Mammary epithelial cell (primary cell): ENCODE measurements at regions of chr1 and their contacts with region 1.

Region 1: GRCh38 chr1:33586111-33586510 is 113.7 kb downstream of the ZSCAN20 start:
- DNase-seq: peak; percentile 45
- H3K4me3 ChIP-seq: no peak overlapping the region
- H3K27ac ChIP-seq: no peak overlapping the region
- H3K4me1 ChIP-seq: no peaks in the 10 kb centered on the region
- H3K27me3 ChIP-seq: no peaks in the 10 kb centered on the region
- CTCF ChIP-seq: no peak

Region 2: GRCh38 chr1:33030575-33030974 is 555.5 kb before region 1 on chr1:
- CTCF ChIA-PET with region 1: no interaction called
- dilution Hi-C with region 1: no loop called
- in situ Hi-C with region 1: no loop called
- intact Hi-C with region 1: no loop called
- DNase-seq: no peak
- H3K4me3 ChIP-seq: no peak overlapping the region
- H3K27ac ChIP-seq: no peak overlapping the region
- H3K4me1 ChIP-seq: peaks cover 10% of the 10 kb centered on the region
- H3K27me3 ChIP-seq: no peaks in the 10 kb centered on the region
- CTCF ChIP-seq: no peak

Region 3: DNA sequence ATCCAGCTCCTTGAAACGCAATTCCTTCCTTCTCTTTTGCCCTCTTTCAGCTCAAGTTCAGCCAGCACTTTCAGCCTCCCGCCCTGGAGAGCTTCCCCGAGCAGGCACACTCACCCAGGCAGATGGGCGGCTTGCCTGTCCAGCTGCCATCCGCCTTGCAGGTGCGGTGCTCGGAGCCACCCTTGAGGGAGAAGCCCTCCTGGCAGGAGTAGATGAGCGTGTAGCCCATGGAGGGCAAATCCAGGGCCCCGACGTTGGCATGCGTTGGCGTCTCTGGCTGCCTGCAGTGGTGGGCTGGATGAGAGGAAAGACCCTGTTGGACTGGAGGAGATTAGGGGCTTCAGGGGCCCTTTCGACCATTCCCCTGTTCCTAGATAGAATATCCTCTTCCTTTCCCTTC is 53.2 kb before region 1 on chr1:
- CTCF ChIA-PET with region 1: no interaction called
- dilution Hi-C with region 1: loop called (anchors 5 kb)
- in situ Hi-C with region 1: no loop called
- intact Hi-C with region 1: no loop called
- DNase-seq: no peak
- H3K4me3 ChIP-seq: no peak overlapping the region
- H3K27ac ChIP-seq: no peak overlapping the region
- H3K4me1 ChIP-seq: no peaks in the 10 kb centered on the region
- H3K27me3 ChIP-seq: no peaks in the 10 kb centered on the region
- CTCF ChIP-seq: no peak

Region 4: DNA sequence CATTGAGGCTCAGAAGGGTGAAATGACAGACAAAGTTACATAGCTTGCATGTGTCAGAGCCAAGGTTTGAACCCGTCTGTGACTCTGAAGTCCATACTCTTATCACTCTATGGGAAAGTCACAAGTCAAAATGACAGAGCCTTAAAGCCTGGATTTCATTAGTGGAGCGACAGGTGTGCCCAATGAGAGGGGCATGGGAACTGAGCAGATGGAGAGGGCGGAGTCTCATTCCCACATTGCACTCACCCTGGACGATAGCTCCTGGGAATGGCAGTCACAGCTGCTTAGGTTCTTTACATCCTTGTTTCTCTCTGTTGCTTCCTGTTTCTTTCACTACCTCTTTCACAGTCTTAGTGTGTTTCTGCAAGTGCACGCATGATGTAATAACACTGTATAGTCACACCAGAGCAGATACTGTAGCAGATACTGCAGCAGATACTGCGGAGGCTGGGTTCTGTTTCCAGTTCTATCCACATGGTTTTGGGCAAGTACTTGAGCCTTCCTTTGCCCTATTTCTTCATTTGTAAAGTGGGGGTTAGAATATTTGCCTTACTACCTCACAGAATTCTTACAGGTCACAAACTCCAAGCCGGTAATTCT is 13.5 kb after region 1 on chr1:
- CTCF ChIA-PET with region 1: no interaction called
- dilution Hi-C with region 1: no loop called
- in situ Hi-C with region 1: no loop called
- intact Hi-C with region 1: no loop called
- DNase-seq: no peak
- H3K4me3 ChIP-seq: no peak overlapping the region
- H3K27ac ChIP-seq: no peak overlapping the region
- H3K4me1 ChIP-seq: no peaks in the 10 kb centered on the region
- H3K27me3 ChIP-seq: no peaks in the 10 kb centered on the region
- CTCF ChIP-seq: no peak

Region 5: DNA sequence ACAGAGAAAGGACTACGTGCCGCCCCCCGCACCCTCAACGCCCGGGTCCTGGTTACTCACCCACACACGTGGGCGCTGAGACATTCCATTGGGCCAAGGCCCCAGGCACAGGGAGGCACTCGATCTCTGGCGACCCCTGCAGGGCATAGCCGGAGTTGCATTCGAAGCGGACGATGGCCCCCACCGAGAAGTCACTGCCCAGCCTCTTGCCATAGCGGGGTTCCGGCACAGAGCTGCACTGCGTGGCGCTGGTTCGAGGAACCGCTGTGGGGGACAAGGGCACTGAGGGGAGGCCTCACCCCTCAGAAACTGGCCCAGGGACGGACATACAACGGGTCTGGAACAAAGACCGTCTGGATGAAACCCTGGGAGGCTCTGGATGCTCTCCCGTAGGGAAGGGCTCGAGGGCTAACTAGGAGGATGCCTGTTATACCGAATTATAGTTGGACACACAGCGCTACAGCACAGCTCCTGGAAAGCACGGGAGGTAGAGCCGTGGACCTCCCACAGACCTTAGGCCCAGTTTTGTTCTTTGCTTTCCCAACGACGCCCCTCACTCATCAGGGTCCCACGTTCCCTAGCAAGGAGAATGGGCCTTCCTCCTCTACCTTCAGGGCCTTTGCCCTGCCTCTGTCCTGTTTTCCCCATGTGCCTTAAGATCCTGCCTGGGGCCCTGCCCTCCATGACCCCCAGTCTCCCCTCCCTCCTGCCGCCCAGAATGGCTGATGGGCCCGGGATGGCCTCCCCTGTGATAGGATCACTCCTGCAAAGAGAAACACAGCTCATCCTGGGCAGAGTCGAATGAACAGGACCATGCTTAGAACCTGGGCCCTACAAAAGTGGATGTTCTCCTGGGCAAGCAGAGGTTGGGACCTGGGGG is 39.1 kb after region 1 on chr1:
- CTCF ChIA-PET with region 1: no interaction called
- dilution Hi-C with region 1: no loop called
- in situ Hi-C with region 1: no loop called
- intact Hi-C with region 1: no loop called
- DNase-seq: no peak
- H3K4me3 ChIP-seq: no peak overlapping the region
- H3K27ac ChIP-seq: no peak overlapping the region
- H3K4me1 ChIP-seq: no peaks in the 10 kb centered on the region
- H3K27me3 ChIP-seq: peaks cover 4% of the 10 kb centered on the region
- CTCF ChIP-seq: peak; percentile 7 to 18

Region 6: GRCh38 chr1:33692206-33693188 is 106.4 kb after region 1 on chr1:
- CTCF ChIA-PET with region 1: no interaction called
- dilution Hi-C with region 1: no loop called
- in situ Hi-C with region 1: no loop called
- intact Hi-C with region 1: no loop called
- DNase-seq: no peak
- H3K4me3 ChIP-seq: no peak overlapping the region
- H3K27ac ChIP-seq: no peak overlapping the region
- H3K4me1 ChIP-seq: no peaks in the 10 kb centered on the region
- H3K27me3 ChIP-seq: no peaks in the 10 kb centered on the region
- CTCF ChIP-seq: no peak